ENCODE measurements at regions of chr14 and their contacts with region 1.

Region 1: GRCh38 chr14:69726761-69727511 is 40.0 kb upstream of the SRSF5 start:
- DNase-seq: peak; percentile 83 to 88 (median 86)
- ATAC-seq: peak; percentile 94
- H3K4me3 ChIP-seq: no peak overlapping the region
- H3K4me1 ChIP-seq: no peaks in the 10 kb centered on the region
- CTCF ChIP-seq: peak; percentile 95

Region 2: DNA sequence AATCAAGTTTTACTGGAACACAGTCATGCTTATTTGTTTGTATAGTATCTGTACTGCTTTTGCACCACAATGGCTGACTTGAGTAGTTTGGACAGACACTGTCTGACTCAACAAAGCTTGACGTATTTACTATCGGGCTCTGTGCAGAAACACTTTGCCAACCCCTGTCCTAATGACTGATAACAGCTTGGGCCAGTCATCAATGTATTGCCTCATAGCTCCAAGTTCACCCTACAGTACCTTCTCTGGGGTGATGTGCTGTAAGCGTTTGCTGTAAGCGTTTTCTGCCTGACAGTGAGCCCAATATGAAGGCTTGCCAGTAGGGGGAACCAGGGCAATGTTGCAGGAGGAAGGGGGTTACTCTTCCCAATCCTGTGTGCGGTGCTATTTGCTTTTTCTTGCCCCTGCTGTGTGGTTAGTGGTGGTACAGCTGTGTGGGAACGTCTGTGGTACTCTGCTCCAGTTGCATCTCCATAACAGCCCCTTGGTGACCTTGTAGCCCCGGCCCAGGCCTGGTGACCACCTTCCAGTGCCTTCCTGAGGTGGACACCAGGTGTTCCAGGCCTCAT is 146.8 kb before region 1 on chr14:
- intact Hi-C with region 1: loop called (anchors 5 kb)
- DNase-seq: no peak
- ATAC-seq: peak; percentile 68
- H3K4me3 ChIP-seq: no peak overlapping the region
- H3K4me1 ChIP-seq: no peaks in the 10 kb centered on the region
- CTCF ChIP-seq: no peak

Region 3: DNA sequence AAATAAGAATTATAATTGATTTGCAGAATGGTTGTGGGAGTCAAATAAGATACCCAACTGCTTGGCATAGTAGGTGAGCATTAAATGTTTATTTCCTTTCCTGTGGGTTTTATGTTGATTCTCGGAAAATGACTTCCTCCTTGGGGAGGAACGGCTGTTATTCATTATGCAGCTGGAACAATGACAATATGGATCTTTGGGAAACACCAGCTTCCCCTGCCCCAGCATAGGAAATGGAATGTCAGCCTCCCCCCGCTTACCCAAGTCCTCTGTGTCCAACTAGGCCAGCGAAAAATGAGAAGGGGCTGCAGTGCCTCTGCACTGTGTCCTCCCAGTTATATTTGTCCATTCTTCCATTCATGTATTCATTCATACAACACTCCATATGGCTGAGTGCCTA is 140.5 kb before region 1 on chr14:
- intact Hi-C with region 1: loop called (anchors 5 kb)
- DNase-seq: no peak
- ATAC-seq: no peak
- H3K4me3 ChIP-seq: no peak overlapping the region
- H3K4me1 ChIP-seq: peaks cover 15% of the 10 kb centered on the region
- CTCF ChIP-seq: no peak

Region 4: GRCh38 chr14:69600304-69600891 is 126.5 kb before region 1 on chr14:
- intact Hi-C with region 1: loop called (anchors 5 kb)
- DNase-seq: no peak
- ATAC-seq: no peak
- H3K4me3 ChIP-seq: no peak overlapping the region
- H3K4me1 ChIP-seq: peaks cover 6% of the 10 kb centered on the region
- CTCF ChIP-seq: no peak